Cardiac septum (tissue), 1 donor: ENCODE measurements at regions of chr21 and their contacts with region 1.

Region 1: GRCh38 chr21:29024474-29025327 is at the start of gene USP16:
- DNase-seq: peak; percentile 97
- total RNA-seq, gene USP16: 37.8 TPM

Region 2: DNA sequence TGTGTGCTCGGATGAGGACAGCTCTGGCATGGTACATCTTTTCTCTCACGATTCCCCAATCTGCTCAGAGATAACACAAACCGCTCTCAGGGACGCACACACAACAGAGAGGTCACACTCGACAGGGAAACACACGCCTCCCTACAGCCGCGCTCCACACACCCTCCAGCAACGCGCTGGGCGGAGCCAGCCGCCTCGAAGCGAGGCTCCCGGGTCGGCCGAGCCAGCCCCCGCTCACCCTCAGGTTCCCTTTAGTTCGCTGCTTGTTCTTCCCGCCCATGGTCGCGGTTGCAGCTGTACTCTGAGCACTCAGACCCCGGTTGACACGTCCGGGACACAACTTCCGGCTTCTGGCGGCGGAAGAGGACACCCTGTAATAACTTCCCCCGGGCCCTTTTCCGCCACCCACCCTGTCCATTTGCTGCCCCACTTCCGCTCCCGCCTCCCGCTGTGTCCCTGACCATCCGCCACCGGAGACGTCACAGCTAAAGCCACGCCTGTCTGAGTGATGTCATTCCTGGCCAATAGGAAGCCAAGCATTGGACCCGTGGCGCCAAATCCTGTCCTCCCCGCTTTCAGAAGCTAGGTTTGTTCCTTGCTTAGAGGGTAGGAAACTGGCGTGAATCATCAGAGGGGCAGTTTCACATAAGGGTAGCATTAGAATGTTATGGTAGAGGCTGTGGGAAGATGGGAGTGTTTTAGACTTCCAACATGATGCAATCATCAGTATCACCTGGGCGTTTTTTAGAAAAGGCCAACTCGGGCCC is 32.0 kb before region 1 on chr21 and contains the start of gene LTN1:
- intact Hi-C with region 1: loop called (anchors 2 kb)
- DNase-seq: peak; percentile 99
- total RNA-seq, gene LTN1: 18.6 TPM

Region 3: DNA sequence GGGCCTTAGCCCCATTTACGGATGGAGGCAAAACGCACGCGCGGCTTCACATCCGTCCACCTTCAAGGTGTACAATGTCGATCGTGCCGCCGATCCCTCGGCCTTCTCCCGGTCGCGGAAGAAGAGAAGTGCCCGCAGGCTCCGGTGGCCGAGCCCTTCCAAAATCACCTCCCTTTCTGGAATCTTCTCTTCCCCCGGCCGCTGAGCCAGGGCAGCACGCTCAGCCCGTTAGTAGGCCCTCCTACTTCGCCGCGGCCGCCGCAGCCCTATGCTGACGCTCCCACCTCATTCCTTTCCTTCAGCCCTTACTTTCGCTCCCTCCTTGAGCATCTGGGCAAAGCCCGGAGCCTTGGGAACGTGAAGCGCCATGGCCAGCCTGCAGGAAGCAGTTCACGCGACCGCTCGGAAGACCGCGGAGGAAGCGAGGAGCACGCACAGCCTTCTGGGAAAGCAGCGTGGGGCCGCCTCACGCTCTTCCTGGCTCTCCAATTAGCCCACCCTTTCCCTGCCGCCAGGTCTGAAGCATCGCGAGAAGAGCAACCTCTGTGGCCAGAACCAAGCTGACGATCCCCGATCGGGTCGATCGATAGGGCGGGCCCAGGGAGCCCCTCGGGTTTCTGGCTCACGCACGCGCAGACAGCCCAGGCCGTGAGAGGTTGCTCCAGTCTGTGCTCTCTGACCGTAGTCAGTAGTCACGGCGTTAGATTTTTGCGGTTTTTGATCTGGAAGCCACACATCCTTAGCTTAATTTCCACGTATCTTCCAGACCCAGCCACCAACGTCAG is 48.7 kb after region 1 on chr21 and contains the start of gene CCT8:
- intact Hi-C with region 1: loop called (anchors 5 kb)
- DNase-seq: peak; percentile 99
- total RNA-seq, gene CCT8: 116 TPM